Left colon (tissue), 2 donors: ENCODE measurements at regions of chr17 and their contacts with region 1.

Region 1: DNA sequence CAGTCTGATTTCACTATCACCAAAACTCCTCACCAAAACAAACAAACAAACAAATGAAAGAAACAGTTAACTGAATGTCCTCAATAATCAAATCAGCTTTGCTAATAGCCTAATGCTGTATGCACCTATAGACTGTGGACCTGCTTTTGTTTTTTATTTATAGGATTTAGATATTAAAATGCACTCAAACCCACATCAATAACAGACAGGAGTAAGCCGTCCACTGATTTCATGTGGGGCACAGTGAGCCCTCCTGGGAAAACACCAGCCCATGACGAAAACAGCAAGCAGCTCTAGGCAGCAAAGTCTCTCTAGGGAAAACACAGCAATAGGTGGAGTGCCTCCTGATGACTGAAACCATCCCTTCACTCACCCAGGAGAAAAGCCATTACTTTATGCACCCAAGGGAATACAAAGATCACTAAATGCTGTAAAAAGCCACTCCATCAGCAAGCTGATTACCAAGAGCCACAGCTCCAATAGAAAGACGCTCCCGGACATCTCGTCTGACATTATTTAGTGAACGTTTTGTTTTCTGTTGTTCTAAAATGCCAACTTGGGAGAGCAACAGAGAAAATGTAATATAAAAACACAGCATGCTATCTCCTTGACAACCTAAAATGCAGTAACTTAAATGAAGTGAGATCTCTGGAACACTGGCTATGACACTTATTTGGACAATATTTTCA is 47.8 kb downstream of the ANKFY1 start:
- DNase-seq: no peak
- ATAC-seq: no peak

Region 2: DNA sequence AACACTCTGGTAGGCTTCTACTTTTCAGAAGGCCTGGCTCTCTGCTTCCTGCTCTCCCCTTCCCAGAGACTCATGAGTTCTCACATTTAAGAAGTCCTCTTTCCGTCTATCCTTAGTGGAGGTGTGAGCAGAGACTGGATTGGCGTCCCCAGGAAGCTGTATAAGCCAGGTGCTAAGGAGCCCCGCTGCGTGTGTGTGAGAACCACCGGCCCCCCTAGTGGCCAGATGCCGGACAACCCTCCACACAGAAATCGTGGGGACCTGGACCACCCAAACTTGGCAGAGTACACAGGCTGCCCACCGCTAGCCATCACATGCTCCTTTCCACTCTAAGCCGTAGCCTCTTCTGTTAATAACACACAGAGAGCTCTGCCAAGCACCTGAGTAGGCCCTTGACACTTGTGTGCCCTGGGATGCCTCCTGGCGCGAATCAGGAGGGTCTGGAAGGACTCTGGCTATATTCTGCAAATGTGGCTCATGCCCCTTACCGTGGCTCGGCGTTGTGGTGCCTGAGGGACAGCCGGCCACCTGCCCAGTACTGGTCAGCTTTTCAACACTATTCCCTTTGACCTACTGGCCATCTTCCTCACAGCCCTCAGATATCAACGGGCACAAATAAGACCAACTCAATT is 59.2 kb before region 1 on chr17:
- intact Hi-C with region 1: no loop called
- DNase-seq: no peak
- ATAC-seq: no peak

Region 3: DNA sequence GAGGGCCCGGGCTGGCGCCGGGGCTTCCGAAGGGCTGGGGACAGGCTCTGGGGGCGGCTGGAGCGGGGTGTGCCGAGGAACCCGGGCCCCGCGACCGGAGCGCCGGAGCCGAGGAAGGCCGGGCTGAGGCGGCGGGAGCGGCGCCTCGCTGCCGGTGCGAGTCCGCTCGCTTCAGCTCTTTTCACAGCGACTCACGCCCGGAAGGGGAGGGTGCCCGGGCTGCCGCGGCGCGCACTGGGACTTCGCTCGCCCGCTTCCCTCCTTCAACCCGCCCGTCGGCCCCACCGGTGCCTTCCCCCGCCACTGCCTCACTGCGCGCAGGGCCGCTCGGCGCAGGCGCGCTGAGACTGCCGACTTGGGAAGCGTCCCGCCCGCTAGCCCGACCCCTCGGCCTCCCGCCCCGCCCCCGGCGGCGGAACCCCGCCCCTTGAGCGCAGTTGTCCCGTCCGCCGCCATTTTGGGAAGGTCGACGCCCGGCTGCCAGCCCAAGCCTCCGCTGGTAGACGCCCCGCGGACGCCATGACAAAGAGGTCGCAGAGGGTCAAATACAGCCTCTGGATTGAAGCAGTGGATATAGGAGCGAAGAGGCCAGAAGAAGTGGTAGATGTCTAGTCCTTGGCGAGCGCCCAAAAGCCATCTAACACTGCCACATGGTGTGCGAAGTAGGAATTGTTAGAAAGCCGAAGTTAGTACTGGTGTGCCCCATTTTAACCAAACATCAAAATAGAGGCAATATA is 150.5 kb after region 1 on chr17 and contains the start of gene UBE2G1:
- intact Hi-C with region 1: loop called in 1 of 2 experiments (anchors 5 kb)
- DNase-seq: peak; percentile 97 to 99
- ATAC-seq: peak; percentile 88
- total RNA-seq, gene UBE2G1: 59.5 to 71.5 TPM

Region 4: GRCh38 chr17:4420692-4421131 is 204.7 kb after region 1 on chr17:
- intact Hi-C with region 1: loop called in 1 of 2 experiments (anchors 5 kb)
- DNase-seq: peak; percentile 46 to 47
- ATAC-seq: peak; percentile 94